GM10248 (cell line): ENCODE measurements at regions of chr4 and their contacts with region 1.

Region 1: DNA sequence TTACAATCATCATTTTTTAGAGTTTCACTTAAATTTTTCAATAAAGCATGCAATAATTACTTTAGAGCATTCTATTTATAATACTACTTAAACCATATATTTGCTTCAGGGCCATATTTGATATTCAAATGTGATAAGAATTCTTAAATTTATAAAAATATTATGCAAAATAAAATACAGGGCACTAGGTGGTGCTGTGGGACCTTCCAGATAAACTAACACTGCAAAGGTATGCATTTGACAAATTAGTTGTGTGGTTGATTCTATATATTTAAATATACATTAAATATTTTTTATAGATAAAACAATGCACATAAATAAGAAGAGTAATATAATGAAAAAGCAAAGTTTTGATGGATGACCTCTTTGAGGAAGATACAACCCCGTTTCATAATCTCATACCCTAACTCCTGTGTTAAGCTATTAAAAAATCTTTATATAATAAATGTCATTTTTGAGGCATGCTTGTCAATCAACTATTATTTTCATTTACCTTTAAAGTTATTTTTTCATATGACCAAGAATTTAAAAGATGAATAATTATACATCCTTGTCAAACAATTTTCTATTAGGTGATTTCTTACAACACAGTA is 128.4 kb downstream of the REELD1 start:
- DNase-seq: no peak
- CTCF ChIP-seq: peak; percentile 36

Region 2: DNA sequence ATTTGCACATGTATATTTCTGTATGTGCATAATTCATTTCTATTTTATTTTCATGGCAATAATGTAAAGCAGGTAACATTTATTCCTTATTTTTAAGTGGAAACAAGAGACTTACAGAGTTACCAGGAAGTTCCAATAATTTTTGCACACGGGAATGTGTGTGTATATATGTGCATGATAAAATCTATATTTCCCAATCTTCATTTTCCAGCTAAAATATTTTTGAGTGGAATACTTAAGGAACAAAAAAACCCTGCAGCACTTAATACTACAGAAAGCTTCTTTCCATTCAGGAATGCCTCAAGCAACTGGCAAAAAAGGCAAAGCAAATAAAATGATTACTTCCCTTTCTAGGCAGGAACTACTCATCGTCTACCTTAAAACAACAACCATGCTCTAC is 14.5 kb after region 1 on chr4:
- CTCF ChIA-PET with region 1: interaction called, 16 read pairs
- POLR2A ChIA-PET with region 1: no interaction called
- DNase-seq: no peak
- CTCF ChIP-seq: no peak